ENCODE measurements at regions of chr1 and their contacts with region 1.

Region 1: DNA sequence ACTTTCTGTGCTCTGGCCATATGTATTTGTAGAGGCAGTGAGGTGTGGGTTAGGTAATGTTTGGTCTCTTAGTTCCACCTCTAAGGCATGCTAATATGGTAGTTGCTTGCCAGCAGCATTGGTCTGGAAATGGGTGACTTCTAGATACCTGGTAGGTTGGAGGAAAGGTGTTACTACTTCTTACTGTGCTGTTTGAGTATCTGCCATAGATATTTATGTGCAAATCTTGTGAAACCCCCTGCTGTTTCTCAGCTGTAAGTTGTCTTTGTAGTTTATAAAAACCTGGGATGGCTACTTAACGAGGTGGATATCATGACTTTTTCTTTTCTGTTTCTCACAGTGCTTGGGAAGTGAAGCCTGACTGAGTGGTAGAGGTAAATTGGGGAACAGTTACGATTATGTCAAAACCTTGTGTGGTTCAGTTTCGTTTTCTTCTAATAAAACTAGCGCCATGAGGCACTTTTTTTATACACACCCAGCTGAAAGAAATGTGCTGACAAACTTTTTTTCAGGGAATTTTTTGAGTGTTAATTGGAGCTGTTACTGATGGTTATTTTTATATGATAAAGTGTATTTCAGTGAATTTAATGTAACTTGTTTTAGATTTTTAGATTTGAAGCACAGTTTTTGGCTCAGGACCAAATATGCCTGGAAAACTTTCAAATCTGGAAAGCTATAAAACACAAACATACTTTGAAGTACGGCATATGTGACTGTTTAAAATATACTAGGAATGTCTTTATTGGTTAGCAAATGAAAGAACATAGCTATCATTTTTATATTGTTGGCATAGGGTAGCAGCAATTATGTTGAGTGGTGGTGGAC is 42.1 kb downstream of the CAMSAP2 start:
- DNase-seq: no peak

Region 2: GRCh38 chr1:200588698-200589097 is 192.1 kb before region 1 on chr1:
- in situ Hi-C with region 1: no loop called
- DNase-seq: no peak

Region 3: GRCh38 chr1:200620273-200621131 is 160.3 kb before region 1 on chr1 and contains the start of gene KIF14:
- in situ Hi-C with region 1: loop called (anchors 25 kb)
- DNase-seq: peak; percentile 90
- total RNA-seq, gene KIF14: 8.7 and 10.2 TPM in 2 replicates

Measured in SK-MEL-5 (cell line).